ENCODE measurements at regions of chr9 and their contacts with region 1.

Region 1: GRCh38 chr9:33404788-33405362 is 2.5 kb upstream of the AQP7 start:
- DNase-seq: no peak
- H3K4me3 ChIP-seq: no peak overlapping the region
- H3K27ac ChIP-seq: peak overlapping the region; percentile 4 to 25 (median 13)
- H3K4me1 ChIP-seq: peaks cover 0 to 50% (median 21%) of the 10 kb centered on the region in 3 donors
- H3K27me3 ChIP-seq: no peaks in the 10 kb centered on the region
- CTCF ChIP-seq: no peak
- POLR2A ChIP-seq: no peak

Region 2: GRCh38 chr9:33350310-33350709 is 54.6 kb before region 1 on chr9:
- intact Hi-C with region 1: no loop called
- DNase-seq: no peak
- H3K4me3 ChIP-seq: no peak overlapping the region
- H3K27ac ChIP-seq: peak overlapping the region; percentile 1 to 79 (median 58)
- H3K4me1 ChIP-seq: peaks cover 0 to 18% (median 7%) of the 10 kb centered on the region in 3 donors
- H3K27me3 ChIP-seq: no peaks in the 10 kb centered on the region
- CTCF ChIP-seq: no peak
- POLR2A ChIP-seq: no peak

Region 3: DNA sequence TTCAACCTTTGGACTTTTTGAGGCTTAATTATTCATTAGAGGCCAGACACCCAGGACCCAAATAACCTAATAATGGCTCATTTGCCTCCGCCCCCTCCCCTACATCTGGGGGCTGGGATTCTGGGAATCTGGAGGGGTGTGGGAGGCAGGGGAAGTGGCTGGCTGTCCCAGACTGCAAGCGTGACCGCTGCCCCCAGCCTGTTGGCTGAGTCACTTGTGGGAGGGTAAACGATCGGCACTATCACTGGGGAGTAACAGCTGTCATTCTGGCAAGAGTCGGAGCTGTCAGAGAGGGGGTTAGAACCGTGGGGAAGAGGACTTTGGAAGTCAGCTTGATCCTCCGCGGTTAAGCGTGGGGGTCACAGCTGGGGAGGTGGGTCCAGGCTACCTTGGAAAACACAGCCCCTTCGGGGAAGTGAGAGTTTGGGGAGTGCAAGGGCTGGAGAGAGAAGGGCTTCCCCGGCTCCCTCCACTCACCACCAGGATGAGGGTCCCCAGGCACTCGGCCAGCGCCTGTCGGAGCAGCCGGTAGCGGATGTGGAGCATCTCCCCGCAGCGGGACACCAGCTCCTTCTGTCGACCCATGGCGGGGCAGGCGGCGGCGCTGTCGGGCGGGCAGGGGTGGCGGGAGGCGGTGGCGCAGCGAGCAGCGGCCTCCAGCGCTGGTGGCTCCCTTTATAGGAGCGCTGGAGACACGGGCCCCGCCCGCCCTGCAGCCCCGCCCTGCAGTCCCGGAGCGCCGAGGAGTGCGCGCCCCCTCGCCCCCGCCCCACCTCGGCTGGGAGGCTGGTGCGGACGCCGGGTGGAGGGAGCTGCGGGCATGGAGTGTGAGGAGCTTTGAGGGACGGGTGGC is 42.3 kb after region 1 on chr9 and contains the start of gene AQP3:
- intact Hi-C with region 1: loop called (anchors 5 kb)
- DNase-seq: no peak
- H3K4me3 ChIP-seq: peak within 1 kb of the TSS; percentile 70 to 78 (median 74)
- H3K27ac ChIP-seq: peak within 1 kb of the TSS; percentile 87 to 92 (median 92)
- H3K4me1 ChIP-seq: peaks cover 20 to 92% (median 30%) of the 10 kb centered on the region in 3 donors
- H3K27me3 ChIP-seq: no peaks in the 10 kb centered on the region
- CTCF ChIP-seq: peak in 5 of 6 experiments; percentile 25 to 45 (median 43)
- POLR2A ChIP-seq: peak in 2 of 4 donors; percentile 80 to 81
- total RNA-seq, gene AQP3: 1,484 to 2,988 (median 2,291) TPM

Region 4: DNA sequence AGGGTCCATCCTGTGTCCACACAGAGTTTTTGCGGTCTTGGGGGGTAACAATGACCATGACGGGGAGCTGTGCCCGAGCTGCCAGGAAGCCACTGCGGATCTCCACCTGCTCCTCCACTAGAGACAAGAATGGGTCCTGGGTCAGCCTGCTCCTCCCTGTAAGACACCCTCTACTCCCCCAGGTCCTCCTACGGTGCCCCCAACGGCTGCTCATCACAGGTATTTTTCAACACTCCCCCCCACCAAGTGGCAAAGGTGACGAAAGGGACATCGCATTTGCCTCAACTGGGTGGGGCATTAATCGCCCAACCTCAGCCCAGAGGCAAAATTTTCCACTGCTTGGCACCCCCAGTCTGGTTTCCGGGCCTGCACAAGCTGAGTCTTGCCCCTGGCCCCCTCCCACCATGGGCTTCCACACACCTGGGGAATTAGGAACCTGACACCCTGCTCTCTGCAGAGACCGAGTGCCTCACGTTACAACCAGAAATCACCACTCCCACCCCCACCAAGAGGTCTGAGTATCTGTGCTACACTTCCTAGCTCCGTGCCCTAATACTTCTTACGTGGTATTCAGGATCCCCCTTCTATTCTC is 59.3 kb after region 1 on chr9:
- intact Hi-C with region 1: loop called (anchors 5 kb)
- DNase-seq: no peak
- H3K4me3 ChIP-seq: no peak overlapping the region
- H3K27ac ChIP-seq: peak overlapping the region; percentile 44 to 77 (median 74)
- H3K4me1 ChIP-seq: peaks cover 15 to 79% (median 33%) of the 10 kb centered on the region in 3 donors
- H3K27me3 ChIP-seq: no peaks in the 10 kb centered on the region
- CTCF ChIP-seq: no peak
- POLR2A ChIP-seq: no peak